MCF 10A (cell line): ENCODE measurements at regions of chr1 and their contacts with region 1.

Region 1: GRCh38 chr1:153922972-153923925 is at the start of gene GATAD2B:
- DNase-seq: peak; percentile 100
- H3K4me3 Mint-ChIP-seq: peak within 1 kb of the TSS; percentile 74
- H3K27ac Mint-ChIP-seq: peak within 1 kb of the TSS; percentile 74
- H3K4me1 Mint-ChIP-seq: peaks cover 34% of the 10 kb centered on the region
- H3K27me3 Mint-ChIP-seq: no peaks in the 10 kb centered on the region
- CTCF ChIP-seq: no peak
- total RNA-seq, gene GATAD2B: 95.5 and 108 TPM in 2 replicates

Region 2: DNA sequence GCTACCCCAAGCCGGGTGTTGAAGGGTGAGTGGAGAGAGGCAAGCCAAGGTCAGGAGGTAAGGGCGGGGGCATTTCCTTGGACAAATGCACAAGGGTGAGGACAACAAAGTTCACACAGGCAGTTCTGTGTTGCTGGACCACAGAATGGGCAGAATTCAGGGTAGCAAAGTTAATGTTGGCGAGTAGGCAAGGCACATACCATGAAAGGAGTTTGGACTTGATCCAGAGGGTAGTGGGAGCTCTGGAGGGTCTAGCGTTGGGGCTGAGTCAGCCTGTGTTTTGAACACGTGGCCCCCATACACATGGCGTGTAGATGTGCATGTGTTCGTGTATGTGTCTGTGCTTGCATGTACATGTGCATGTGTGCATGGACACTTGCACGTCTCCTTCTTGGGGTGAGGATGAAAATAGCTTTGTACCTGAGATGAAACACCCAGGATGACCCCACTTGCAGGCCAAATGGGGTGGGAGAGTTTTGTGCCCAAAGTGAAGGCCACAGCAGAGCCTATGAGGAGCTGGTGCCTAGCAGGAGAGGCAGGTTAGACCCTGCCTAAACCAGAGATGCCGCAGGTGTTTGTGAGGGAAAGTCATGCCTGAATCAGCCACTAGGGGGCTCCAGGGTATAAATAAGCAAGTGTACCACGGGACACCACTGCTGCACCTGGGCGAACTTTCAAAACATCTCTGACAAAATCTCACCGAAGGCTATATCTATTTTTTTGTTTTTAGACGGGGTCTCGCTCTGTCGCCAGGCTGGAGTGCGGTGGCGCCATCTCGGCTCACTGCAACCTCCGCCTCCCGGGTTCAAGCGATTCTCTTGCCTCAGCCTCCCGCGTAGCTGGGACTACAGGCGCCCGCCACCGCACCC is 126.2 kb before region 1 on chr1:
- CTCF ChIA-PET with region 1: interaction called, 40 read pairs
- POLR2A ChIA-PET with region 1: interaction called, 13 read pairs
- intact Hi-C with region 1: loop called (anchors 1 kb)
- DNase-seq: peak; percentile 88
- H3K4me3 Mint-ChIP-seq: no peak overlapping the region
- H3K27ac Mint-ChIP-seq: no peak overlapping the region
- H3K4me1 Mint-ChIP-seq: peaks cover 15% of the 10 kb centered on the region
- H3K27me3 Mint-ChIP-seq: no peaks in the 10 kb centered on the region
- CTCF ChIP-seq: peak; percentile 93

Region 3: GRCh38 chr1:153827168-153827964 is 95.9 kb before region 1 on chr1:
- CTCF ChIA-PET with region 1: interaction called, 17 read pairs
- POLR2A ChIA-PET with region 1: interaction called, 14 read pairs
- intact Hi-C with region 1: no loop called
- DNase-seq: no peak
- H3K4me3 Mint-ChIP-seq: no peak overlapping the region
- H3K27ac Mint-ChIP-seq: peak overlapping the region; percentile 31
- H3K4me1 Mint-ChIP-seq: peaks cover 5% of the 10 kb centered on the region
- H3K27me3 Mint-ChIP-seq: no peaks in the 10 kb centered on the region
- CTCF ChIP-seq: peak; percentile 12

Region 4: DNA sequence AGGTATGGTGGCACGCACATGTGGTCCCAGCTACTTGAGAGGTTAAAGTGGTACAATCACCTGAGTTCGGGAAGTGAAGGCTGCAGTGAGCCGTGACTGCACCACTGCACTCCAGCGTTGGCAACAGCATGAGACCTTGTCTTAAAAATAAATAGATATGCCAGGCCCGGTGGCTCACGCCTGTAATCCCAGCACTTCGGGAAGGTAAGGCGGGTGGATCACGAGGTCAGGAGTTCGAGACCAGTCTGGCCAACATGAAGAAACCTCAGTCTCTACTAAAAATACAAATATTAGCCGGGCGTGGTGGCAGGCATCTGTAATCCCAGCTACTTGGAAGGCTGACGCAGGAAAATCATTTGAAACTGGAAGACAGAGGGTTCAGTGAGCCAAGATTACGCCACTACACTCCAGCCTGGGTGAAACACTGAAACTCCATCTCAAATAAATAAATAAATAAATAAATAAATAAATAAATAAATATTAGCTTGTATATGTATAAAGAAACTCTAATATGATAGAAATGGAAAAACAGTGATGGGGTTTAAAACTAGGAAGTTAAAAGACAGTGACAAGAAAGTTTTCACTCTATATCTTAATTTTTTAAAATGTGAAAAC is 19.3 kb before region 1 on chr1:
- CTCF ChIA-PET with region 1: interaction called, 30 read pairs
- POLR2A ChIA-PET with region 1: interaction called, 55 read pairs
- intact Hi-C with region 1: no loop called
- DNase-seq: peak; percentile 53
- H3K4me3 Mint-ChIP-seq: no peak overlapping the region
- H3K27ac Mint-ChIP-seq: peak overlapping the region; percentile 66
- H3K4me1 Mint-ChIP-seq: peaks cover 5% of the 10 kb centered on the region
- H3K27me3 Mint-ChIP-seq: no peaks in the 10 kb centered on the region
- CTCF ChIP-seq: no peak

Region 5: GRCh38 chr1:153958111-153958960 is 35.1 kb after region 1 on chr1 and contains the start of gene CRTC2:
- CTCF ChIA-PET with region 1: interaction called, 3 read pairs
- POLR2A ChIA-PET with region 1: interaction called, 98 read pairs
- intact Hi-C with region 1: no loop called
- DNase-seq: peak; percentile 100
- H3K4me3 Mint-ChIP-seq: peak within 1 kb of the TSS; percentile 96
- H3K27ac Mint-ChIP-seq: peak within 1 kb of the TSS; percentile 92
- H3K4me1 Mint-ChIP-seq: peaks cover 55% of the 10 kb centered on the region
- H3K27me3 Mint-ChIP-seq: no peaks in the 10 kb centered on the region
- CTCF ChIP-seq: no peak
- total RNA-seq, gene CRTC2: 47.0 and 55.1 TPM in 2 replicates